Gastrocnemius medialis (tissue), 4 donors: ENCODE measurements at regions of chr14 and their contacts with region 1.

Region 1: GRCh38 chr14:52729925-52730667 is at the start of gene STYX:
- DNase-seq: peak; percentile 98
- ATAC-seq: peak; percentile 95 to 97
- H3K4me3 ChIP-seq: peak within 1 kb of the TSS; percentile 72 to 99 (median 92)
- H3K27ac ChIP-seq: peak within 1 kb of the TSS; percentile 90 to 98 (median 94)
- H3K4me1 ChIP-seq: peaks cover 11 to 13% of the 10 kb centered on the region in 2 donors
- H3K27me3 ChIP-seq: no peaks in the 10 kb centered on the region
- CTCF ChIP-seq: peak in 3 of 5 experiments; percentile 17 to 51 (median 47)
- POLR2A ChIP-seq: peak; percentile 80 to 93
- total RNA-seq, gene STYX: 17.1 to 30.7 (median 20.3) TPM

Region 2: DNA sequence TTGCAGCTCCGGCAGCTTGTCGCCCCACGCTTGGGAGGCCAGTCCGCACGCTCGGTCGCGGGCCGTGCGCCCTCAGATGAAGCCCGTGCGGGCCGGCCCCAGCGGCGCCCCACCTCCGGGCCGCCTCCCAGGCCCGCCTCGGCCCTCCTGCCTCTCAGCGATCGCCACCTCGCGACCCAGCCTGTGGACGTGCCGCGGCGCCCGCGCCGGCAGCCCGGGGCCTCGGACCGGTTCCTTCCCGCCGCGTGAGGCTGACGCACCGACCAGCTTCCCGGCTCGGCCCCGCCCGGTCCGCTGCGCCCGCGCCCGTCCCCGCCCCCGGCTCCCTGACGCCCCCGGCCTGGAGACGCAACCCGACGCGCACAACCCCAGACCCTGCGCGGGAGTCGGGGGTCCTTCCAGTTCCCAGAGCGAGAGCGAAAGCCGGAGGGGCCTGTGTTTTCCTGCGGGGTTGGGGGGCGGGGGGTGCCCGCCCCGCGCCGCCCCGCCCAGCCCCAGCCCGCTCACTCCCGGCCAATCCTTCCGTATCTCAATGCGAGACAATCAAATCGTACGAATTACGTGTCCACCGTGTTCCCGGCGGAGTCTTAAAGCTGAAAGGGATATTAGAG is 34.5 kb before region 1 on chr14 and contains the start of gene ERO1A:
- in situ Hi-C with region 1: no loop called
- intact Hi-C with region 1: loop called (anchors 1 kb)
- DNase-seq: peak; percentile 79 to 81
- ATAC-seq: peak; percentile 95
- H3K4me3 ChIP-seq: peak within 1 kb of the TSS; percentile 72 to 98 (median 86)
- H3K27ac ChIP-seq: peak within 1 kb of the TSS; percentile 95 to 98 (median 96)
- H3K4me1 ChIP-seq: peaks cover 8 to 19% of the 10 kb centered on the region in 2 donors
- H3K27me3 ChIP-seq: no peaks in the 10 kb centered on the region
- CTCF ChIP-seq: no peak
- POLR2A ChIP-seq: peak; percentile 84
- total RNA-seq, gene ERO1A: 11.9 to 25.6 (median 19.1) TPM

Region 3: DNA sequence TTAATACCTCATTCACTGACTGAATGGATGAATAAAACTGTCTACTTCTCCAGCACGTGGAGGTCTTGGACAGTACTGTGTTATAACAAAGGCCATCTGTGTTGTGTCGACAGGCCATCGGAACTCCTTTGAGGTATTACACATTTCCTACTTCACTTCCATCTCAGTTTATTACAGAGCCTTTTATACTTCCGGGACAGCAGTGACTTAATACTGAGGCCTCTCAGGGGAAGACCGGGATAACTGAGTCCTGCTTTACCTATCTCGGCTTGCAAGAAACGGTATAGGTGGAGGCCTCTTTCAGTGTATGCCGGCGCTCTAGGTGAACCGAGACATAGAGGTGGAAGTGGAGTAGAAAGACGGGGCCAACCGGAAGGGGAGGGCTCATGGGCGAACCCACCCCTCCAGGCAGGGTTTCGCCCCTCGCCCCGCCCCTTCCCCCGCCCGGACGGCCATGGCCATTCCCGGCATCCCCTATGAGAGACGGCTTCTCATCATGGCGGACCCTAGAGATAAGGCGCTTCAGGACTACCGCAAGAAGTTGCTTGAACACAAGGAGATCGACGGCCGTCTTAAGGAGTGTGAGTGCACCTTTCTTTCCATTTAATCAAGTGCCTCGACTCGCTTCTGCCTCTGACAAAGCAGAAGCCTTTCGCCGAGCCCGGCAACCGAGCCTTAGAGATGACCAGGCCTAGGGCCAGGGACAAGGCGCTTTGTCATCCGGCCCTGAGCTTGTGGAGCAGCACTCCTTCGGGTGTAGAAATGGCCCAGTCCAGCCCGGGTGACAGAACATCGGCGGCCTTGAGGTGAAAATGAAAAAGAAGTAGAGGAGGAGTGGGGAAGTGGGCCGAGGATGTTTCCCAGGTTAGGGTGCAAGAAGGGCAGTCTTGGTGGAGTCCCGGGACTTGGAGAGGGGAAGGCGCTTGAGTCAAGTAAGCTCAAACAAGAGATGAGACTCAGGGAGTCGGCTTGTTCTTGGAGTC is 23.1 kb before region 1 on chr14 and contains the start of gene PSMC6:
- in situ Hi-C with region 1: no loop called
- intact Hi-C with region 1: loop called (anchors 1 kb)
- DNase-seq: peak; percentile 93 to 94
- ATAC-seq: peak; percentile 98
- H3K4me3 ChIP-seq: peak within 1 kb of the TSS; percentile 76 to 94 (median 88)
- H3K27ac ChIP-seq: peak within 1 kb of the TSS; percentile 92 to 95 (median 94)
- H3K4me1 ChIP-seq: peaks cover 16 to 20% of the 10 kb centered on the region in 2 donors
- H3K27me3 ChIP-seq: no peaks in the 10 kb centered on the region
- CTCF ChIP-seq: no peak
- POLR2A ChIP-seq: peak; percentile 67 to 78
- total RNA-seq, gene PSMC6: 158 to 251 (median 178) TPM

Region 4: GRCh38 chr14:52791203-52792096 is 61.4 kb after region 1 on chr14 and contains the start of gene GNPNAT1:
- in situ Hi-C with region 1: loop called in 1 of 4 experiments (anchors 10 kb)
- intact Hi-C with region 1: loop called (anchors 2 kb)
- DNase-seq: peak; percentile 67 to 74
- ATAC-seq: peak; percentile 85 to 86
- H3K4me3 ChIP-seq: peak within 1 kb of the TSS; percentile 86 to 93 (median 88)
- H3K27ac ChIP-seq: peak within 1 kb of the TSS; percentile 87 to 90 (median 88)
- H3K4me1 ChIP-seq: peaks cover 18% of the 10 kb centered on the region in 2 donors
- H3K27me3 ChIP-seq: no peaks in the 10 kb centered on the region
- CTCF ChIP-seq: no peak
- POLR2A ChIP-seq: peak; percentile 51 to 68
- total RNA-seq, gene GNPNAT1: 10.0 to 19.4 (median 12.4) TPM